Breast epithelium (tissue), 4 donors: ENCODE measurements at regions of chr1 and their contacts with region 1.

Region 1: DNA sequence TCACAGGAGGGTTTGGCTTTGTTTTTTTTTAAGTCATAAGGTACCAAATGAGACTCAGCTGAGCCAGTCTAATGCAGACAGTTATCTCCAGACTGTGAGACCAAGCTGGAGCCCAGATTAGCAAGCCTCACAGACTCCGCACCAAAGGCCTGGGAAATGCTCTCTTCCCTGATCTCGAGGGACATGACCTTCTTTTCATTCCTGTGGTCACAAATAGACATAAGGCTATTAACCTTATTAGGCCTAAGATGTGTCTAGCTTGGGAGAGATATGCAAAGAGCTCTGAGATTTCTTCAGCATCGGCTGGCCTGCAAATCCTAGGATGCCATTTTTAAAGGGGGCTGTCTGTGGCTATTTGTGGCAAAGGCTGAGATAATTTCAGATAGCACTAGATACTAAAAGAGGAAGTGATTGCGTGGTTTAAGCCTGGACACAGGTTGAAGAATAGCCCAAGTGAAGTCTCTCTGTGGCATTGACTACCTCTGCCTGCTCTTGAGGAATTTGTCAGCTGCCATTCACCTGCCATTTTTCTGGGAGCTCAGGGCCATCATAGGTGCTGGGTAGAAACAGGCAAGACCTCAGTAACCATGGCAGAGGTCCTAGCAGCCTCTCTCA is 301.3 kb downstream of the SIPA1L2 start:
- DNase-seq: no peak
- H3K4me3 ChIP-seq: no peak overlapping the region
- H3K27ac ChIP-seq: no peak overlapping the region
- H3K4me1 ChIP-seq: no peaks in the 10 kb centered on the region
- H3K27me3 ChIP-seq: no peaks in the 10 kb centered on the region
- CTCF ChIP-seq: no peak
- POLR2A ChIP-seq: no peak

Region 2: DNA sequence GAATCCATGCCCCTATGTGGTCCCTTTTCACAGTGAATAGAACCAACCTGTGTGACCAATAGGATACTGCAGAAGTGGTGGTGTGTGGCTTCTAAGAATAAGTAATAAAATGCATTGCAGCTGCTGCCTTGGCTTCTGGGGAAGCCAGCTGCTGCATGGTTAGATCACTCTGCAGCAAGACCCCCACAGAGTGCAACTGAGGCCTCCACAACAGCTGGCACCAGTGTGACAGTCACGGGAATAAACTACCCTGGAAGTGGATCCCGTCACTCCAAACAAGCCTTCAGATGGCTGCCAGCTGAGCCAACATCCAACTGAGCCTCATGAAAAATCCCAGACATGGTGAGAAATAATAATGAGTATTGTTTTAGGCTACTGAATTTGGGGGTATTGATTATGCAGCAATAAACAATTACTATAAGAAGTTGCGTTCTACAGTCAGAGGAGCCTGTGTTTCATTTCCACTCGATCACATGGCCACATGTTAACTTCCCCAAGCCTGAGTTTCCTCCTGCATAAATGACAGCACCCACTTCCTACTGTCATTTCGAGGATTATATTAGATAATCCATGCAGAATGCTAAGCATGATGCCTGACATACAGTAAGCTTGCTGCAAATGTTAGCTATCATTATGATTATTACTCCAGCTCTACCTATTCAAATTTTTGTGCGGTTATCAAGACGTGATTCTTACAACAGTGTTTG is 1707.1 kb before region 1 on chr1:
- intact Hi-C with region 1: no loop called
- DNase-seq: no peak
- H3K4me3 ChIP-seq: no peak overlapping the region
- H3K27ac ChIP-seq: no peak overlapping the region
- H3K4me1 ChIP-seq: no peaks in the 10 kb centered on the region
- H3K27me3 ChIP-seq: no peaks in the 10 kb centered on the region
- CTCF ChIP-seq: no peak
- POLR2A ChIP-seq: no peak

Region 3: DNA sequence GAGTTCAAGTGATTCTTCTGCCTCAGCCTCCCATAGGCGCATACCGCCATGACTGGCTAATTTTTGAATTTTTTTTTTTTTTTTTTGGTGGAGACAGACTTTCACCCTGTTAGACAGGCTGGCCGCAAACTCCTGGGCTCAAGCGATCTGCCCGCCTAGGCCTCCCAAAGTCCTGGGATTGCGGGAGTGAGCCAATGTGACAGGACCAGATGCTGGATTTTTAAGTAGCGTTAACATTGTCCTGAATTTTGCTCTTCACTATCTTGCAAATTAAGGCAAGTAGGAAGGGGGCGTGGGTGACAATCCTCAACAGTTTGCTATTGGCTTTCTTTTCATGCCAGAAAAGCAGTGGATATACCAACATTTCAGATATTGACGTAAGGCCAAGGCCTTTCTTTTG is 849.8 kb before region 1 on chr1:
- intact Hi-C with region 1: loop called (anchors 10 kb)
- DNase-seq: no peak
- H3K4me3 ChIP-seq: no peak overlapping the region
- H3K27ac ChIP-seq: no peak overlapping the region
- H3K4me1 ChIP-seq: no peaks in the 10 kb centered on the region
- H3K27me3 ChIP-seq: no peaks in the 10 kb centered on the region
- CTCF ChIP-seq: no peak
- POLR2A ChIP-seq: no peak